Heart right ventricle (tissue), 16 donors: ENCODE measurements at regions of chr11 and their contacts with region 1.

Region 1: DNA sequence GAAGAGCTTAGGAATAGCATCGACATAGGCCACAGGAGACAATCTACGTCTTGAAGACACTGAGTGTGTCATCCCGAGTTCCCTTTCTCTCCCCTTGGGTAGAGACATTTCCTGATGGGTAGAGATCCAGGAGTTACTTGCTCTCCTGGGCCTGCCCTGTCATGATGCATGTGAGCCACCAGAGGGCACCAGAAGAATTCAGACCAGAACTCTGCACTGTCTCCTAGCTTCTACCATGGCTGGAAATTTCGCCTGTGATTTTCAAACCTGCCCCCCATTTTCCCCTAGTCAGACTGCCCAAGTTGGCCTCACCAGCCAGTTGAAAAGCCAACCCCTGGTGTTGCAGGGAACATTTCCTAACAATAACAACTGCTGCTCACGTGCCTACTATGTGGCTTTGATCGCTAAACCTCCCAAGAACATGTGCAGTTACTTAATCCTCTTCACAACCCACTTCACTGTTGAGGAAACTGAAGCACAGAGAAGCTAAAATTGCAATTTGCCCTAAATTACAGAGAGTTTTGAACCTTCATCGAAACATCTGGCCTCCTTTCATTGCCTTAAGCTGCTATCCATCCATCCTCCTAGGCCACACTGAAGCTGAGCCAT is 47.2 kb downstream of the C11orf58 start:
- DNase-seq: peak; percentile 36 to 79
- ATAC-seq: peak; percentile 58 to 82 (median 76)
- H3K4me3 ChIP-seq: no peak overlapping the region
- H3K27ac ChIP-seq: peak overlapping the region in 4 of 10 donors; percentile 13 to 54 (median 18)
- H3K4me1 ChIP-seq: peaks cover 0 to 66% (median 57%) of the 10 kb centered on the region in 9 donors
- H3K27me3 ChIP-seq: no peaks in the 10 kb centered on the region
- CTCF ChIP-seq: peak; percentile 82 to 93 (median 91)

Region 2: GRCh38 chr11:16820324-16821092 is 34.9 kb after region 1 on chr11:
- intact Hi-C with region 1: loop called in 2 of 10 experiments (anchors 1 to 5 kb)
- DNase-seq: peak; percentile 81 to 84
- ATAC-seq: peak; percentile 53 to 84 (median 78)
- H3K4me3 ChIP-seq: no peak overlapping the region
- H3K27ac ChIP-seq: peak overlapping the region in 8 of 10 donors; percentile 9 to 75 (median 51)
- H3K4me1 ChIP-seq: peaks cover 0 to 65% (median 50%) of the 10 kb centered on the region in 9 donors
- H3K27me3 ChIP-seq: no peaks in the 10 kb centered on the region
- CTCF ChIP-seq: peak; percentile 71 to 92 (median 86)

Region 3: DNA sequence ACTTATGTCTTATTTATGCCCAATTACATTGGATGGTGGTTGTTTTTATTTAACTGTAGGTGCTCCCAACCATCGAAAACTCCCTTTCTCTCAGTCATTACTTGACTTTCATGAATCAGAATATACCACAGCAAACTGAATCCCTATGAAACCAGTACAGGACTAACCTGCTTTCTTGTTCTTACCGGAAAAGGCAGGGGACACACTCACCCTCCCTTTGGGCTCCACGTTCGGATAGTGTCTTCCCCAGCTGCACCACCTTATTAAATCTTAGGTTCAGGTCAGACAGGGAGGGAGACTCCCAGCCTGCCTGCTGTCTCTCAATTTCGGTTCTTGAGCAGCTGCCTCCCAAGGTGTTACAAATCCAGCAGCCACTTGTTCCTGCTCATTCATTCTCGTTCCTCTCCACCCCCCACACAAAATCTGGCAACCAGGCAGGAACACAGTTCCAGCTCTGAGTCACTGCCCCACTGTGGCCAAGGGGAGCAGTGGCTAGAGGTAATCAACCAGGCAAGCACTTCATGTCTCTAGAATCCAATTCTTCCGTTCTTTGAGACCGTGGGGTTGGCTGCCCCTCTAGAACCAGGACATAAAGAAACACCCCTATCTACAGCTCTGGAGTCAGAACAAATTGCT is 95.6 kb after region 1 on chr11:
- intact Hi-C with region 1: loop called in 7 of 10 experiments (anchors 1 to 10 kb)
- DNase-seq: peak; percentile 58 to 70
- ATAC-seq: peak; percentile 84 to 94 (median 88)
- H3K4me3 ChIP-seq: peak overlapping the region in 7 of 10 donors; percentile 6 to 38 (median 18)
- H3K27ac ChIP-seq: peak overlapping the region in 9 of 10 donors; percentile 14 to 79 (median 60)
- H3K4me1 ChIP-seq: peaks cover 0 to 75% (median 41%) of the 10 kb centered on the region in 9 donors
- H3K27me3 ChIP-seq: no peaks in the 10 kb centered on the region
- CTCF ChIP-seq: peak in 8 of 9 donors; percentile 28 to 69 (median 48)

Region 4: GRCh38 chr11:16935518-16936302 is 150.1 kb after region 1 on chr11:
- intact Hi-C with region 1: loop called in 5 of 10 experiments (anchors 2 to 10 kb)
- DNase-seq: no peak
- ATAC-seq: peak in 5 of 8 donors; percentile 20 to 54 (median 48)
- H3K4me3 ChIP-seq: no peak overlapping the region
- H3K27ac ChIP-seq: peak overlapping the region in 9 of 10 donors; percentile 18 to 89 (median 74)
- H3K4me1 ChIP-seq: peaks cover 6 to 50% (median 26%) of the 10 kb centered on the region in 9 donors
- H3K27me3 ChIP-seq: no peaks in the 10 kb centered on the region
- CTCF ChIP-seq: peak; percentile 13 to 74 (median 68)

Region 5: DNA sequence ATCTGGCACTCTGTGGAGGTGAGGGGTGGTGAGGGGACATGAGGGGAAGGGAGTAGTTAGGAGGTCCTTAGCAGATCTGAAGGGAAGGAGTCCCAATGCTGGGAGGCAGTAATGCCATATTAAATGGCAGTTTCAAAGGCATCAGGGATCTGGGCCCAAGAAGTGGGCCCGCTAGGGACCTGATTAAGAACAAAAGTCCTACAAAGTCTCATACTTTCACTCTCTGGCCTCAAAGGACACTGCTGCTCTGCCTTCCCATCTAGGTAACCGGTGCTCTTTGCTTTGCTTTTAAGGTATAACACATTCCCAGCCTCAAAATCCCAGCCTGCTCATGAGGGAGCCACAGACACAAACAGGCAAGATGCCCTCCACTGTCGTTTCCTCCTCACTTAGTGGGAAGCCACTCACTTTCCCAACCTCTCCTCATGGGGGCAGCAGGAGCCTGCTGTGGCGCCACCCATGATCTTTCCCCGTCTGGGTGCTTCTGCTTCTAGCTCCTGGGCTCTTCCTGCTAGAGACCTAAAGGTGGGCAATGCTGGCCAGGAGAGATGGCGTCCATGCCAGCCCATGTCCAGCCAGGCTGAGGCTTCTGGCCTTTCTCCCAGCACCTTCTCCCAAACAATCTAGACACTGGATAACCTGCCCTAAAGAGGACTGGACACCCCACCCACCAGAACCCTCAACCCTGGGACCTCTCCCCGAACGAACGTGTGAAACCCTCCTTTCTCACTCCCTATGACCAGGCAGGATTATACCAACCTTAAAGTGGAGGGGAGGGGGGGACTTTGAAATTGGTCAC is 160.2 kb after region 1 on chr11:
- intact Hi-C with region 1: loop called in 3 of 10 experiments (anchors 5 to 10 kb)
- DNase-seq: peak; percentile 32 to 46
- ATAC-seq: peak; percentile 71 to 90 (median 87)
- H3K4me3 ChIP-seq: no peak overlapping the region
- H3K27ac ChIP-seq: no peak overlapping the region
- H3K4me1 ChIP-seq: peaks cover 0 to 8% (median 0%) of the 10 kb centered on the region in 9 donors
- H3K27me3 ChIP-seq: no peaks in the 10 kb centered on the region
- CTCF ChIP-seq: peak; percentile 42 to 81 (median 74)